ENCODE measurements at regions of chr9 and their contacts with region 1.

Region 1: GRCh38 chr9:2857564-2858198 is 13.8 kb upstream of the PUM3 start:
- DNase-seq: peak; percentile 48
- H3K27ac ChIP-seq: no peak overlapping the region
- CTCF ChIP-seq: peak; percentile 84

Region 2: GRCh38 chr9:2260354-2261306 is 597.1 kb before region 1 on chr9:
- CTCF ChIA-PET with region 1: interaction called, 11 read pairs
- POLR2A ChIA-PET with region 1: no interaction called
- DNase-seq: peak; percentile 38
- H3K27ac ChIP-seq: no peak overlapping the region
- CTCF ChIP-seq: no peak

Region 3: GRCh38 chr9:2570615-2571479 is 286.8 kb before region 1 on chr9:
- CTCF ChIA-PET with region 1: no interaction called
- POLR2A ChIA-PET with region 1: no interaction called
- DNase-seq: no peak
- H3K27ac ChIP-seq: no peak overlapping the region
- CTCF ChIP-seq: no peak